ENCODE measurements at regions of chr3 and their contacts with region 1.

Region 1: GRCh38 chr3:27596334-27596841 is 112.2 kb upstream of the SLC4A7 start:
- H3K4me3 Mint-ChIP-seq: no peak overlapping the region
- H3K27ac Mint-ChIP-seq: peak overlapping the region; percentile 84
- H3K4me1 Mint-ChIP-seq: peaks cover 39% of the 10 kb centered on the region
- H3K27me3 Mint-ChIP-seq: no peaks in the 10 kb centered on the region

Region 2: GRCh38 chr3:27632431-27633223 is 36.2 kb after region 1 on chr3:
- intact Hi-C with region 1: loop called (anchors 5 kb)
- H3K4me3 Mint-ChIP-seq: peak overlapping the region; percentile 83
- H3K27ac Mint-ChIP-seq: peak overlapping the region; percentile 72
- H3K4me1 Mint-ChIP-seq: peaks cover 17% of the 10 kb centered on the region
- H3K27me3 Mint-ChIP-seq: peaks cover 13% of the 10 kb centered on the region